Right ventricle myocardium inferior (tissue), 1 donor: ENCODE measurements at regions of chr16 and their contacts with region 1.

Region 1: GRCh38 chr16:10579965-10580882 is at the start of gene EMP2:
- DNase-seq: peak; percentile 88
- ATAC-seq: peak; percentile 85
- total RNA-seq, gene EMP2: 110 TPM

Region 2: DNA sequence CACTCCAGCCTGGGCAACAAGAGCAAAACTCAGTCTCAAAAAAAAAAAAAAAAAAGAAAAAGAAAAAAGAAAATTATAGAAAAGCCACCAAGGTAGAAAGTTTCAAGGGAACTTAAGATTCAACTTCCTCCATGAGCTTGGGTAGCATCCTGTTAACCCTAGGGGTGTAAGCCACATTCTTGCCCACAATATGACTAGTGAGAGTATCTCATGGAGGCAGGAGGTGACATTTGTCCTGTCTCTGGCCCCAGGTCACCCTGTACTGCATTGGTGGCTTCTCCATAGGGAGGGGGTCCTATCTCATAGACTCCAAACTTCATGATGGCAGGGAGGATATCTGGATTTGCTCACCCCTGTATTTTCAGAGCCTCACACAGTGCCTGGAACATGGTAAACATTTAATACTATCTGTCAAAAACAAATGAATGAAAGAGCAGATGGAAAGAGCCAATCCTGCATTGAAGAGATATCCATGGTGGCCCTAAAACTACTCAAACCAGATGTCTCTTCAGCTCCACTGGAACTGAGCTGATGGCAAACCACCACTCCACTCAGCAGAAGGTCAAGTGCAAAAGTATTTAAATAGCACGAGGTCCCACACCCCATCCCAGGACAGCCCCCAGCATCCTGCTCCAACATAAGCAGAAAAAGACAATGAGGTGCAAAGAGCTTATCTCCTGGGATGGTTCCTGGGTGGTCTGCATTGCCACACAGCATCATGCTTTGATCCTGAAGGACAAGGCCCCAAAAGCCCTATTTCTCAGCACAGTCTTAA is 50.1 kb before region 1 on chr16:
- intact Hi-C with region 1: loop called (anchors 2 kb)
- DNase-seq: no peak
- ATAC-seq: peak; percentile 61

Region 3: DNA sequence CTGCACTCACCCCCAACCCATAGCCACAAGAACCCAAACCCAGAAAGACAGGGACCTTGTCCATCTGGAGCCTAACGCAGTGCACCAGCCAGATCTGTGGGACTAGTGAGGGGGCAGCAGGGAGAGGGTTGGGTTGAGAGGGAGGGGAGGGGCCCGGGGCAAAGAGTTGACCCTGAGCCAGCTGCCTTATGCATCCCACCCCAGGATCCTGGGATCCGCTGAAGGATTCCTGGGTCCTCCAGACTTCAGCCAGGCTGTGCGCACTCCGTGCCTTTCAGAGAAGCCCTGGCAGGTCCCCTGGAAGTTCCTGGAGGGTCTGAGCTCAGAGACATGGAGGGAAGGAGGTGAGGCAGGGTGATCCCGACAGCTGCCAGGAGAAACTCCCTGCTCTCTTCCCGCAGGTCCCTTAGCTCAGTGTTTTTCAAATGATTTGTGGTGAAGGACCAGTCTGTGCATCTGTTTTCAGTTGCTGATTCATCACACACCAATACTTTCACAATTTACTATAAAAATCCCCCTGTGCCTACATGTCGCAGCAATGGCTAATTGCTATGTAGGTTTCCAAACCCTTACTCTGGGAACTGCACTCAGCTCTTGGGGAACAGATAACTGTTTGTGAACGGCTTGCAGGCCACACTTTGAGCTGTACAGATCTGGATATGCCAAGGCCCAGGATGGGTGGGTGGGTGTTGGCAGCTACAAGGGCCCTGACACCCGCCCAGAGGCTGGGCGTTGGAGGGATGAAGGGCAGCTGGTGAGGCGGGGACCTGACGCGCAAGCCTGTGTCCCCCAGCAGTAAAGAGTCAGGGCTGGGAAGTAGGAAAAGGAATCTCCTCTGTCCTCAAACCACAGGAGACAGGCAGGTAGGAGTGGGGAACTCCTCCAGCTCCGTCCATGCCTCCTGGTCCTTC is 20.6 kb after region 1 on chr16:
- intact Hi-C with region 1: loop called (anchors 1 kb)
- DNase-seq: no peak
- ATAC-seq: peak; percentile 58

Region 4: DNA sequence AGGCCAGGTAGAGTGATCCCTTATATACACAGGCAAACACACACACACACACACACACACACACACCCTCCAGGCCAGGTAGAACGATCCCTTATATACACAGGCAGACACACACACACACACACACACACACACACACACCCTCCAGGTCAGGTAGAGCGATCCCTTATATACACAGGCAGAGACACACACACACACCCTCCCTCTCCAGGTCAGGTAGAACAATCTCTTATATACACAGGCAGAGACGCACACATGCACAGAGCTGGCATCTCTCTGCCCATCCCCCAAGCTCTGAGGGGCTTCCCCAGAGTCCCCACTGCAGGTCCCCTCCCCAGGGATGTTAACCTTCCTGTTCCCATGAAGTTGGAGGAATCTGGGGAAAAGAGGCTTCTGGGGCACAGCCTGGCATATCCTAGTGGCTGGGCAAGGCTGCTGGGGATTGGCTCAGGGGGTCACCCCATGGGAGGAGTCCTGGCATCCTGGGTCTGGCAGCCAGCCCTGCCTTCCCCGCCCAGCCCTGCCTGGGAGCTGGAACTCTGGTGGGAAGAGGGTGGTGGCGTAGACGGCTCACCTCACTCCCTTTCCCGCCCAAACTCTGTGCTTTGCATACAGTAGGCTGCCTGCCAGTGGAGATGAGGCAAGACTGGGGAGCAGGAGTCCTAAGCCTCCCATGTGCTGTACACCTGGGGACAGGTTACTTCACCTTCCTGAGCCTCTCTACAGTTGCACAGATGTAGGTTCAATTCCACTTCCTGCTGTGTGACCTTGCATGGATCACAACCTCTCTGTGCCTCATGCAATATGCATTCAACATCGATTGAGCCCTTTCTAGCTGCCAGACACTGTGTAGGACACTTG is 72.7 kb after region 1 on chr16:
- intact Hi-C with region 1: no loop called
- DNase-seq: no peak
- ATAC-seq: no peak

Region 5: GRCh38 chr16:10737068-10737625 is 156.9 kb after region 1 on chr16:
- intact Hi-C with region 1: loop called (anchors 5 kb)
- DNase-seq: no peak
- ATAC-seq: peak; percentile 60

Region 6: DNA sequence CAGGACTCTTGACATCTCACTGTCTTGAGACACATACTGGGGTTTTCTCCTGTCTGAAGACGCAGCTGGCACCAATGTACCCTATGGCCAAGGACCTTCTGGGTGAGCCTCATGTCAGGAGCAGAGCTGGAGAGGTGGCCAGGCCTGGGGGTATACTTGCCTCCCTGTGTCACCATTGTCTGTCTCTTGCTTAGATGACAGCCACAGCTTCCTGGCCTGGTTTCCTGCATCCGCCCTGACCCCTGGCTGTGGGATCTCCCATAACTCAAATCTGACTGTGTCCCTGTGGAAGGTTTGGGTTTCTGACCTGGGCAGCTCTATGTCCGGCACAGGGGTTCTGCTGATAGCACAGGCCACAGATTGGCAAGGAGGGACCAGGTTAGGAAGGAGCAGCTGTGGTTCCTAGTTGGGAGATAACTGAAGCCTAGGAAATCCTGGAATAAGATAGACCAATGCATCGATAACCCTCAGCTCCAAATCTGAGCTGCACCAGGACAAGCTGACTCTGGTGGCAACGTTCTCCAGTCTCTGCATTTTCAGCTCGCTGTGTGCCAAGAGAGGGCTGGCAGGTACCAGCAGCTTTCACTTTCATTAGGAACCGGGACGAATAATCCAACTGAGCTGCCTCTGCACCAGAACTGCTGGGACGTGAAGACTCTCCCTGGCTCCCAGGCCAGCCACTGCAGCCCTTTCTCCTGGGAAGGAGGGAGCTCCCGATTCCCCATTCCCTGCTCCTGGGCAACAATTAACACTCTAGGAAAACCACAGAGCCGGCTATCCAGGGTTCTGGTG is 357.0 kb after region 1 on chr16:
- intact Hi-C with region 1: loop called (anchors 5 kb)
- DNase-seq: no peak
- ATAC-seq: peak; percentile 15

Region 7: DNA sequence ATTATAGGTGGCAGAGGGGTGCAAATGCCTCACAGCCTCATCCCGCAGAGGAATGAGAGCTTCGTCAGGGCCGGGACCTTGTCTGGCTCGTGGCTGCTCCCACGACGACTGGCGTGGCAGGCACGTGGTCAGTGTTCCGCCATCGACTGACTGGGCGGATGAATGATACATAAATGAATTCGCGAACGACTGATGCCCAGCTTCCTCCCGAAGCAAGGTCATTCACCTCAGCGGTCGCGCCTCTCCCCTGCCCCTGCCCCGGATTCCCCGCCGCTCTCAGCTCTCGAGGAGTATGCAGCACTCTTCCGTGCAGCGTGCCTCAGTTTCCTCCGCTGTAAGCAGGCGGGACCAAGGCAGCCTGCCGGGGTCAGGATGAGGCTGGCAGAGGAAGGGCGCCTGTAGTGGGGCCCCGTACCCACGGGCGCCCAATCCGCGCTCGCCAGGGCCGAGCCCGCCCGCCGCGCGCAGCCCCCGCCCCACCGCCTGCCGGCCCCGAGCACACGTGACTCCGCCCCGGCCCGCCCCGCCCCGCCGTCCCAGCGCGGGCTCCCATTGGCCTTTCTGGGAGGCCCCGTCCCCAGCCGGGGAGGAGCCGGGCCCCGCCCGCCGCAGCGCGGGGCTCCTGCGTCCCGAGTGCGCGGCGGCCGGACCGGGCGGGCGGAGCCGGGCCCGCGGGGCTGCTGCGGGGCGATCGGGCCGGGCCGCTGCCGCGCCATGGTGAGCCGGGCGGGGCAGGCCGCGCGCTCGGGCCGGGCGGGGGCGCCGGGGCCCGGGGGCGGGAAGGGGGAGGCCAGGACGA is 1087.8 kb after region 1 on chr16 and contains the start of gene SNN:
- intact Hi-C with region 1: no loop called
- DNase-seq: peak; percentile 95
- ATAC-seq: peak; percentile 93
- total RNA-seq, gene SNN: 27.7 TPM